Sigmoid colon (tissue), 7 donors: ENCODE measurements at regions of chr16 and their contacts with region 1.

Region 1: DNA sequence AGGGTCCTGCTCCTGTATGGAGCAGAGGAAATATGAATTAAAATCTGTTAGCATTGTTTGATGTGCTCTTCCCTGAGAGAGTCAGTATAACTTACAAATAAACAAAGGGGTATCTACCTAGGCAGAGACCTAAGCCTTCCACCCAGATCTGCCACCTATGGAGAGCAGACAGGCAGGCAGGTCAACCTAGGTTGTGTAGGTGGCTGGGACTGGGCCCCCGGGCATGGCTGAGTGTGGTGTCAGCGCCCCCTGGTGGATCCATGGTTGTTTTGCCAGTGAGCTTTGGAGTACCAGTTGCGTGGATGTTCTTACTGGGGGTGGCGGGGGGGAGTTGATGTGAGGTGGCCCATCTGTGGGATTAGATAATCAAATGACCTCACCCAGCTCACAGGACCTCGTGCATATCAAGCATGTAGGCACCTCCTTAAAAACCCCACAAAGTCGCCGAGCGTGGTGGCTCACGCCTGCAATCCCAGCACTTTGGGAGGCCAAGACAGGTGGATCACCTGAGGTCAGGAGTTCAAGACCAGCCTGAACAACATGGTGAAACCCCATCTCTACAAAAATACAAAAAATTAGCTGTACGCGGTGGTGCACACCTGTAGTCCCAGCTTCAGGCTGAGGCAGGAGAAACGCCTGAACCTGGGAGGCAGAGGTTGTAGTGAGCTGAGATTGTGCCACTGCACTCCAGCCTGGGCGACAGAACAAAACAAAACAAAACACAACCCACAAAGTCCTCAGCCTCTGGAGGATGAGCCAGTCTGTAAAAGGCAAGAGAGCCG is 17.6 kb downstream of the DUS2 start:
- DNase-seq: peak; percentile 88
- H3K4me3 ChIP-seq: no peak overlapping the region
- H3K27ac ChIP-seq: no peak overlapping the region
- H3K4me1 ChIP-seq: no peaks in the 10 kb centered on the region
- H3K27me3 ChIP-seq: no peaks in the 10 kb centered on the region
- CTCF ChIP-seq: peak; percentile 48 to 80 (median 76)
- EP300 ChIP-seq: no peak
- POLR2A ChIP-seq: no peak

Region 2: GRCh38 chr16:67660564-67661028 is 380.1 kb before region 1 on chr16 and contains the start of gene PARD6A:
- intact Hi-C with region 1: no loop called
- DNase-seq: peak; percentile 99
- H3K4me3 ChIP-seq: peak within 1 kb of the TSS; percentile 65 to 94 (median 80)
- H3K27ac ChIP-seq: peak within 1 kb of the TSS; percentile 92 to 96 (median 96)
- H3K4me1 ChIP-seq: peaks cover 0 to 29% (median 26%) of the 10 kb centered on the region in 4 donors
- H3K27me3 ChIP-seq: peaks cover 0 to under 1% (median 0%) of the 10 kb centered on the region in 3 donors
- CTCF ChIP-seq: no peak
- EP300 ChIP-seq: peak in 1 of 4 donors; percentile 42
- POLR2A ChIP-seq: no peak
- total RNA-seq, gene PARD6A: 12.8 to 16.6 (median 14.0) TPM

Region 3: DNA sequence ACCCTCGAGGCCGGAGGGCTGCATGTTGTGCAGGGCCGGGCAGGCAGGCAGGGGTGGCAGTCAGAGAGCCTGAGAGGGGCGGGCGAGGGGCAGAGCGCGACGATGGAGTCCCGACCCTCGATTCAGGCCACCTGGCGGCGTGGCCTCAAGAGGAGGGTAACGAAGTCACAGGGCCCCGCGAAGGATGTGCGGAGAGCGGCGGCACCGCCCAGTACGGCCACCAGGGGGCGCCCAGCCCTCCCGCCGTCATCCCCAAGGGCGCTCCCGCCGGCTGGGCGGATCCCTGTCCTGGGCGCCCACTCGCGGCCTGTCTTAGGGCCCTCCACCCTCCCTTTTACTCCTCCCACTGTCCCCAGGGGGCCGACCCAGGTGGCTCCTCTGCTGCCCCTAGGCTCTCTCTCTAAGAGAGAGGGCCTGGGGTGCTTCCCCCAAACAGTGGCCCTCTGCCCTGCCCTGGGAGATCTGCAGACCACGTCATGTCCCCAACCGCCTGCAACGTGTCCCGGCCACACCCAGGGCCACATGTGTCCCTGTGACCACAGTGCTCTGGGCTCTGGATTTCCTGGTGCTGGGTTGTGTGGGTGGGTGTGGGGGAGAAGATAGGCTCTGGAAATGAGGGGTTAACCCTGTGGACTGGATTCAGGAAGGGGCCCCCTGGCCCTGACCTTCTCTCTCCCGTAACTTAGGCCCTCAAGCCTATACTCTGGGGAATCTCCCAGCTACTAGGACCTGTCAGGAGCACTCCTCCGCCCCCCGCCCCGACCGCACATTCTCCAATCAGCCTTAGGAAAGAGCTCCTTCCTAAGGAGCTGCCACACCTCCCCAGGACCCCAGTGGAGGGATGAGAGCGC is 47.3 kb before region 1 on chr16:
- intact Hi-C with region 1: loop called (anchors 5 kb)
- DNase-seq: peak; percentile 90
- H3K4me3 ChIP-seq: peak overlapping the region in 3 of 4 donors; percentile 25 to 42 (median 41)
- H3K27ac ChIP-seq: peak overlapping the region; percentile 46 to 60 (median 48)
- H3K4me1 ChIP-seq: peaks cover 0 to 12% (median 11%) of the 10 kb centered on the region in 4 donors
- H3K27me3 ChIP-seq: no peaks in the 10 kb centered on the region
- CTCF ChIP-seq: peak; percentile 93 to 100 (median 94)
- EP300 ChIP-seq: no peak
- POLR2A ChIP-seq: no peak